Left ventricle myocardium superior (tissue), 1 donor: ENCODE measurements at regions of chrX and their contacts with region 1.

Region 1: DNA sequence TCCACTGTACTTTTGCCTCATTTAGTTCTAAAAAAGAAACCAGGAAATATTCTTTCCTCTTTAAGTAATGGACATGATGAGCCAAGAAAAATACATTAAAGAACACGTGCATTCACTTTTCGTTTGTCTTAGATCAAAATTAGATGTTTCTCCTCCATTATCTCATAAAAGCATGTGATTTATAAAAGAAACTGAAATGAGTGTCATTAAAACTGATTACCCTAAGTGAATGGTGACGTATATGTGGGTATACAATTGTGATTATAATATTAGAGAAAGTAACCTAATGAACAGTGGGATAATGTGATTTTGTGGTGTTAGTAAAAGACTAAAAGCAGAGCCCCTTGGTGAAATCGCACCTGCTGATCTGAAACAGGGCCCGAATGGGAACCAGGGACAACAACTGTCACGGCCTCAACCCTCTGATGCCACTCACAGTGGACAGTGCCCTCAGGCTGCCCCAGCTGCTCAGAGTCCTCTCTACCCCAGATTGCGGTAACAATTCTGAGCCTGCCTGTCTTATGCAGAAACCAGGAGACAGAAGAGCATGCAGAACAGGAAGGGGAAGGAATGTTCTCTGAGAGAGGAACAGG is 25.7 kb upstream of the HS6ST2 start:
- DNase-seq: no peak
- ATAC-seq: no peak

Region 2: DNA sequence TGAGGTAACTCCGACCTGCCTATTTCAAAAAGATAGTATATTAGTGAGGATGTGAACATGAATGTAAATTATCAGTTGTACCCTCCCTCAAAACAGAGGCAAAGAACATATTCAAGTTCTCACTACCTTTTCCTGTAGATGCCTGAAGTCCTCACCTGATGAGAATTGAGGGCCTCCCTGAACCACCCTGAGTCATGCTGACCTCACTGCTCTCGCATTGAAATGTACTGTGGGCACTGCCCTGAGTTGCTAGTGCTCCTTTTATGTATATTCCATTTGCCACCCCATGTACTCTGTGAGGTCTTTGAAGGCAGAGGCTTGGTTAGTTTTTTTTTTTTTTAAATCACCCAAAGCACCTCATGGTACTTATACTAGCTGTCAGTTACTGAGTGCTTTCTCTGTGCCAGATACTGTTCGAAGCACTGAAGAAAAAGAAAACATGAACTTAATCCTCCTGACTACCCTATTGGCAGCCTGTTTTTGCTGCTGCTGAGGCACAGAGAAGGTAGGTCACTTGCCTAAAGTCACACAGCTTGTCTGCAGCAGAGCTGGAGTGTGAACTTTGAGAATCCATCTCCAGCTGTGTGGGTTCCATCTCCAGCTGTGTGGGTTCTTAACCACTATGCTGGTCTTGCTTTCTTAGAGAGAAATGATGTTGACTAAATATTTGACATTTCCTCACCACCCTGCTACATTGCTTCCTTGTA is 684.2 kb after region 1 on chrX:
- intact Hi-C with region 1: loop called (anchors 5 kb)
- DNase-seq: no peak
- ATAC-seq: no peak

Region 3: DNA sequence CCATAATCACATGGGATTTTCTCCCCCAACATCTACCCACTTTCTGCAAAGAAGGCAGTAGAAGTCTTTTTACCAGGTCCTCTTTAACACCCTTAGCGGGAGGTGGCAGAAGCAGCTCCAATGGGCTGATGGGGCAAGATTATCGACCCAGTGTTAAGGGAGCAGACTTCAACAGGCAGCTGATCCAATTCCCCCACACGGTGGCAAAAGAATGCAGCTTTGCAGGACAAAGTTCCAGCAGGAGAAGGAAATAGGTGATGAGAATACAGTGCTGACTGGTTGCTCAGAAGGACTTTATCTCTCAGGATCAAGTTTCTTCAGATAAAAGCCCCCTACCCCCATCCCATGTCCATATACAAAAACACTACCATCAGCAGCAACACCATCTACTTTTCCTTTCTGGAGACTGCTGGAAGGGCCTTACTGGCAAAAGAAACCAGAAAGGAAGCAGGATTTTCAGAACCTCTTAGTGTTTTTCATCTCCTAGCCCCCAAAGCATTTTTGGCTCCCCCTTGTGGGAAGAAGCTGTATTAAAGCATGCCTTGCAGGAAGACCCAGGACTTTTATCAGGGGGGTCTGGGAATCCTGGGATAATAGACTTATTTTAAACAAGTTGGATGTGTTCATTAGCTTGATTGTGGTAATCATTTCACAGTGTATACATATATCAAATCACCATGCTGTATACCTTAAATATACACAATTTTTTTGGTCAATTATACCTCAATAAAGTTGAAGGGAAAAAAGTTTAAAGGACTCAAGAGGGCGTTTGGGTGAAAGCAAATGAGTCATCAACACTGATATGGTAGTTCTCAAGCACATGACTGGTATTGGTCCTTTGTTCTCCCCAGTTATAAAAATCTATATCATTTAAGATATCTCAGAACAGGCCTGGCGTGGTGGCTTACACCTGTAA is 854.9 kb after region 1 on chrX:
- intact Hi-C with region 1: loop called (anchors 10 kb)
- DNase-seq: no peak
- ATAC-seq: no peak